ENCODE measurements at regions of chr13 and their contacts with region 1.

Region 1: GRCh38 chr13:36858290-36858689 is 39.3 kb downstream of the RFXAP start:
- DNase-seq: no peak
- H3K4me3 ChIP-seq: no peak overlapping the region
- H3K27ac ChIP-seq: no peak overlapping the region
- H3K4me1 ChIP-seq: peaks cover 6% of the 10 kb centered on the region
- H3K27me3 ChIP-seq: no peaks in the 10 kb centered on the region
- CTCF ChIP-seq: peak; percentile 56

Region 2: GRCh38 chr13:36981156-36981743 is 123.0 kb after region 1 on chr13:
- intact Hi-C with region 1: loop called (anchors 5 kb)
- DNase-seq: no peak
- H3K4me3 ChIP-seq: no peak overlapping the region
- H3K27ac ChIP-seq: no peak overlapping the region
- H3K4me1 ChIP-seq: no peaks in the 10 kb centered on the region
- H3K27me3 ChIP-seq: no peaks in the 10 kb centered on the region
- CTCF ChIP-seq: peak; percentile 64